Left lung (tissue), 14 donors: ENCODE measurements at regions of chr2 and their contacts with region 1.

Region 1: GRCh38 chr2:96860065-96861043 is 2.5 kb upstream of the ANKRD39 start:
- DNase-seq: peak in 1 of 4 donors; percentile 61
- ATAC-seq: no peak
- H3K4me3 ChIP-seq: no peak overlapping the region
- H3K27ac ChIP-seq: no peak overlapping the region
- H3K4me1 ChIP-seq: peaks cover 12 to 62% of the 10 kb centered on the region in 2 donors
- H3K27me3 ChIP-seq: peaks cover 0 to 7% of the 10 kb centered on the region in 2 donors
- CTCF ChIP-seq: no peak

Region 2: GRCh38 chr2:96951093-96951654 is 90.8 kb after region 1 on chr2:
- intact Hi-C with region 1: loop called in 1 of 2 experiments (anchors 5 kb)
- DNase-seq: peak in 3 of 4 donors; percentile 79 to 91 (median 80)
- ATAC-seq: peak; percentile 97
- H3K4me3 ChIP-seq: no peak overlapping the region
- H3K27ac ChIP-seq: no peak overlapping the region
- H3K4me1 ChIP-seq: peaks cover 0 to 23% of the 10 kb centered on the region in 2 donors
- H3K27me3 ChIP-seq: peaks cover 0 to 24% of the 10 kb centered on the region in 2 donors
- CTCF ChIP-seq: peak; percentile 79 to 86